Common myeloid progenitor, CD34-positive (primary cell): ENCODE measurements at regions of chr12 and their contacts with region 1.

Region 1: DNA sequence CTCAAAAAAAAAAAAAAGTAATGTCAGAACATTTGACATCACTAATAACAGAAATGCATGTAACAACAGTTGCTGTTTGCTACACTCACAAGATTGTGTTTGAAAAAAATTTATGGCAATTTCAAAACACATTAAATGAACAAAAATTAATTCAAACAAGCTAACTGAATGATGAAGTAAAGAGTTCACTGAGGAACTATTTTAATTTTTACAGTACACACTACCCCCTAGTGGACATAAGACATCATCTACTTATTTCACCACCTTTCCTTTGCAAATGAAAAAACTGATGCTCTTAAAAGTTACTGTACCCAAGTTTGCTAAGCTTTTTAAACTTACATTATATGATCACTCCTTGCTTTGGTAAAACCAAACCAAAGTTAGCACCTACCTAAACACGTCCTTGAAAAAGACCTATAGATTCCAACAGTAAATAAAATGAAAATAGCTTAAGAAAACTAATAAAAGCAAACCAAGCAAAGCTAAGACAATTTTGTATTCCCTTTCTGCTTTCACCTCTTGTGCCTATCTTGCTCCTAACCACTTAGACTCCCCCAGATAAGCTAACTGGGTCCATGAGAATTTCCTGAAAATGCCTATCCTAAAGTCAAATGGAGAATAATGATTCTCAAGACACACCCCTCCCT is 22.2 kb downstream of the UBE2N start:
- DNase-seq: peak; percentile 55 to 78 (median 75)
- H3K4me3 ChIP-seq: no peak overlapping the region
- H3K27ac ChIP-seq: no peak overlapping the region
- H3K4me1 ChIP-seq: peaks cover 0 to 17% (median 9%) of the 10 kb centered on the region in 4 experiments
- H3K27me3 ChIP-seq: no peaks in the 10 kb centered on the region

Region 2: GRCh38 chr12:92987362-92987761 is 432.1 kb before region 1 on chr12:
- CTCF ChIA-PET with region 1: interaction called, 17 read pairs
- POLR2A ChIA-PET with region 1: no interaction called
- DNase-seq: peak; percentile 68 to 84 (median 83)
- H3K4me3 ChIP-seq: peak overlapping the region in 1 of 7 experiments; percentile 21
- H3K27ac ChIP-seq: no peak overlapping the region
- H3K4me1 ChIP-seq: peaks cover 5 to 8% (median 6%) of the 10 kb centered on the region in 4 experiments
- H3K27me3 ChIP-seq: no peaks in the 10 kb centered on the region

Region 3: DNA sequence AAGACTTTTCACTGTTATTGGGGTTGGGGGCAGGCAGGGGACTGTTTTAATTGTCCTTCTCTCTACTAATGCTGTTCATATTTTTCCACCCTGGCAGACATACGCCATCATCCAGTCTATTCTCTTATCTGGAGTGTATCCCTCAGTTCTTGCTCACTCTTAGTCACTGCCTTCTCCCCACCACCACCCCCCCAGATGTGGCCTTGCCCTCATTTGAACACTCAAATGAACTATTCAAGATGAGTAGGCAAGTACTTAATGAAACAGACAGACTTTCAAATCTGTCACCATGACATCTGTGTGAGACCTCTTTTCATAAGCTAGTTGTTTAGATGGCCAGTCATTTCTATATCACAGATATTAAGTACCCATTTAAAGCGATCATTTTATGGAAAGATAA is 31.7 kb before region 1 on chr12:
- CTCF ChIA-PET with region 1: no interaction called
- POLR2A ChIA-PET with region 1: no interaction called
- DNase-seq: no peak
- H3K4me3 ChIP-seq: no peak overlapping the region
- H3K27ac ChIP-seq: no peak overlapping the region
- H3K4me1 ChIP-seq: no peaks in the 10 kb centered on the region
- H3K27me3 ChIP-seq: no peaks in the 10 kb centered on the region

Region 4: DNA sequence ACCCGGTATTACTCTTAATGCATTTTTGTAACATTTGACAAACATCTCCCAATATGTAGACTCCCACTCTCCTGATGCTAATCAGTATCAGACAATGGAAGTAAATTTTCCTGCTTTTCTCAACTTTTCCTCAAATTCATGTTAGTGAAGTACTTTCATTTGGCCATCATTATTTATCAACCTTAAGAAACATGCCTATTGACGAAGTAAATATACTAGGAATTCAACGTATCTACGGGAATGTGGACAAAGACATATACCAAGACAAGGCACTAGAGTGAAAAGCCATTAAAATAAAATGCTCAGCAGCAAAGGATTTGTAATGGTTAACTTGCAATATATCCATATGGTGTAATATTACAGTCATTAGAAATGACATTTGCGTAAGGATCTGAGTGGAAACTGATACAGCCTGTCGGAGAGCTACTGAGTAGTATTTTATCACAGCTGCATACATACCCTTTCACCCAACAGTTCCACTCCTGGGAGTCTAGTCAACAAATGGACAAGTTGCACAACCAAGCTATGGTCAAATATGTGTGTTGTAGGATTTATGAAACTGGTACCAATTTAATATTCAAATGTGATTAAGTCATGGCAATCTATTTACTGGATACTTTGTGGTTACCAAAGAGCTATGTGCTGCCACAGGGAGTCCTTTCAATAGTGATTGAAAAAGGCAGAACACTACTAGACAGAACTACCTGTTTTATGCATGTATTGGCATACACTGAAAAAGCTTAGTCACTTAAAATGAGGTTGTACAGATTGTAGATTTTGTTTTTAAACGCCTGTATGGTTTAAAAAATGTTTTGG is 15.3 kb before region 1 on chr12:
- CTCF ChIA-PET with region 1: interaction called, 14 read pairs
- POLR2A ChIA-PET with region 1: no interaction called
- DNase-seq: no peak
- H3K4me3 ChIP-seq: no peak overlapping the region
- H3K27ac ChIP-seq: no peak overlapping the region
- H3K4me1 ChIP-seq: no peaks in the 10 kb centered on the region
- H3K27me3 ChIP-seq: no peaks in the 10 kb centered on the region

Region 5: DNA sequence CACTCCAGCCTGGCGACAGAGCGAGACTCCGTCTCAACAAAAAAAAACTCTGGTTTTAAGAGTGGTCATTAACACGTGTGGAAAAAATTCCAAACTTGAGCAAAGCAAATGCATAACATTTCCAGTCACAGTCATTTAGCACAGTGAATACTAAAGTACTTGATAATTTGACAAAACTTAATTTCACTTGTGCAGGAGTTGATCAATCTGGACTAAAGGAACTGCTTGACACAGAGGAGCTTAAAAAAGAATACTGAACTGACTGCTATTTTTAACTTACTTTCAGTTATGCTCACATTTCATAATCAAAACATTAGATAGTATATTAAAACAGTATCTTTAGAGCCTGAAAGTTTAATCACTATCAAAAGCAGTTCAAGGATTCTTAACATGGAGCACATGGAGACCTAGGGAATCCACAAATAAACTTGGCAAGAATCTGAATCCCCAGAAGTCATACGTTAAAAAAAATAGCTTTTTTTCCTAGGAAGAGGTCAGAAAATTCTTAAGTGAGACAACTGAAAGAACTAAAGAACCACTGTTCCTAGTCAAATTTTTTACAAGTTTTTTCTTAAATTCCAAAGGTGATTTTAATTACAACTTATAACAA is 14.8 kb after region 1 on chr12:
- CTCF ChIA-PET with region 1: interaction called, 42 read pairs
- POLR2A ChIA-PET with region 1: no interaction called
- DNase-seq: no peak
- H3K4me3 ChIP-seq: peak overlapping the region in 1 of 7 experiments; percentile 33
- H3K27ac ChIP-seq: no peak overlapping the region
- H3K4me1 ChIP-seq: peaks cover 3 to 39% (median 26%) of the 10 kb centered on the region in 4 experiments
- H3K27me3 ChIP-seq: no peaks in the 10 kb centered on the region

Region 6: DNA sequence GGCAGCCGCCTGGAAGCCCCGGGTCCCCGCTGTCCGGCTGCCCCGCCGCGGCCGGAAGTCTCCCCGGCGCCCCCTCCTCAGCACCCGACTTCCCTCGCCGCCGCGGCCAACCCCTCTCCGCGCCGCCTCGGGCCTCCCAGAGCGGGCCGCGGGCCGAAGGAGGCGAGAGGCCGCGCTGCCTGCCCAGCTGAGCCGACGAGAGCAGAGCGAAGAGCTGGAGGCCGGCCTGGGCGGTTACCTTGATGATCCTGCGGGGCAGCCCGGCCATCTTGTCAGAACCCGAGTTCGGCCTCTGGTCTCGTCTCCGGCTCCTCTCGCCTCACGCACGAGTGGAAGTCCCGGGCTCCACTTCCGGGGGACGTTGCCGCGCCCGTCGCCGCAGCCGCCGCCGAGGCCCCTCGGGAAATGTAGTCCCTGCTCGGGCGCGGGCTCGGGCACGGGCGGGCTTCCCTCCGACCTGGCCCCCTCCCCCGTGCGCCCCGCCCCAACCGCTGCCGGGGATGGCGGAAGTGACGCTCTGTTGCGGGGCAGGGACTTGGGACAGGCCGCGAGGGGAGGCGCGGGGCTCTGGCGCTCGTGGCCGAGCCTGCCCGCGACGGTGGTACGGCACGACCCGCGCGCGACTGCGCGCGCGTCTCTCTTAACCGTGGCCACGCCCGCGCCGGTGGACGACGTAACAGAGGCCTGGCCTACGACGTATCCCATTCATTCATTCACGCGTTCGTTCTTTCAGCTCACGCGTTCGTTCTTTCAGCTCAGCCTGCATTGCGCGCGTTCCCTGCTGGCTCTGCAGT is 22.3 kb after region 1 on chr12 and contains the start of gene UBE2N:
- CTCF ChIA-PET with region 1: interaction called, 14 read pairs
- POLR2A ChIA-PET with region 1: interaction called, 3 read pairs
- DNase-seq: peak; percentile 97 to 99 (median 98)
- H3K4me3 ChIP-seq: peak within 1 kb of the TSS; percentile 75 to 95 (median 87)
- H3K27ac ChIP-seq: peak within 1 kb of the TSS; percentile 90 to 95
- H3K4me1 ChIP-seq: peaks cover 12 to 39% (median 32%) of the 10 kb centered on the region in 4 experiments
- H3K27me3 ChIP-seq: no peaks in the 10 kb centered on the region

Region 7: GRCh38 chr12:93509482-93509881 is 90.0 kb after region 1 on chr12:
- CTCF ChIA-PET with region 1: no interaction called
- POLR2A ChIA-PET with region 1: no interaction called
- DNase-seq: no peak
- H3K4me3 ChIP-seq: no peak overlapping the region
- H3K27ac ChIP-seq: no peak overlapping the region
- H3K4me1 ChIP-seq: no peaks in the 10 kb centered on the region
- H3K27me3 ChIP-seq: no peaks in the 10 kb centered on the region